Astrocyte of the cerebellum (primary cell): ENCODE measurements at regions of chr15 and their contacts with region 1.

Region 1: GRCh38 chr15:34209421-34210282 is at the start of gene KATNBL1:
- DNase-seq: peak; percentile 79
- H3K4me3 ChIP-seq: peak within 1 kb of the TSS; percentile 57
- CTCF ChIP-seq: peak; percentile 92

Region 2: DNA sequence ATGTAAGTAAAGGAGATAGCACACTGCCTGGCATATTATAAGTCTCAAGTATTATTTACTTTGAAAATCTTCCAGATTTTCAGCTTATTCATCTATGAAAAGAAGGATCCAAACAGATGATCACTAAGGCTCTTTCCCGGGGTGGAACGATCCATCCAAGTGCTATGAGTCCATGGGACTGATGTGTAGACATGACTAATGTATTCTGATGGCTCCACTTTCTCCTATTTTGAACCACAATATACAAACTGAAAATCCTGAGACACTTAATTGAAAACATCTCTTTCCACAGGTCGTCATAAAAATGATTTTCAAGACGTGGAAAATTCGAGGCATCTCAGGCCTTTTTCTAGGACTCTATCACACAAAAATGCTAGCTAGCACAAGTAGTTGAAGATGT is 274.7 kb before region 1 on chr15:
- in situ Hi-C with region 1: no loop called
- DNase-seq: no peak
- H3K4me3 ChIP-seq: no peak overlapping the region
- CTCF ChIP-seq: no peak

Region 3: DNA sequence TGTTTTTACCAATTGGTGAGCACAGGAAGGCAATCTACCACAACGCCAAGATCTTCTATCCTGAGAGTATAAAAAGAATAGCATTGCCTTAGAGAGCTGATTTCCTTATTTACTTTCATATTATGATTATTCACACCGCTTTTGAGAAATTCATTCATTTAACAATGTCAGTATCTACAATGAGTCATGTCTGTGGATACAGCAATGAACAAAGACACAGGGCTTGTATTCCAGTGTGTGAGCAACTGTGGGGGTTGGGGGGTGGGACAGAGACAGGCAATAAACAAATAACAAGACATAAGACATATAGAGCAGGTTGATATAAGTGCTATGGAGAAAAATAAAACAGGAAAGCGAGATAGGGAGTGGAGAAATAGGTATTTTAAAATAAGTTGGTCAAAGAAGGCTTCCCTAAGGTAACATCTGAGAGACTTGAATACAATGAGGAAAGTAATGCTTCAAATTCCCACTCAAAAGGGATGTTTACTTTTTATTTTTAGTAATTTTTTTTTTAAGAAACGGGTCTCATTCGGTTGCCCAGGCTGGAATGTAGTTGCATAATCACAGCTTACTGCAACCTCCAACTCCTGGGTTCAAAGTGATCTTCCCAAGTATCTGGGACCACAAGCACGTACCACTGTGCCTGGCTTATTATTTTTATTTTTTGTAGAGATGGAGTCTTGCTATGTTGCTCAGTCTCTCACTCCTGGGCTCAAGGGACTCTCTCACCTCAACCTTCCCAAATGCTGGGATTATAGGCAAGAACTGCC is 62.1 kb before region 1 on chr15:
- in situ Hi-C with region 1: loop called (anchors 5 kb)
- DNase-seq: no peak
- H3K4me3 ChIP-seq: no peak overlapping the region
- CTCF ChIP-seq: no peak

Region 4: GRCh38 chr15:34259566-34259965 is 49.9 kb after region 1 on chr15:
- in situ Hi-C with region 1: no loop called
- DNase-seq: no peak
- H3K4me3 ChIP-seq: no peak overlapping the region
- CTCF ChIP-seq: no peak